HCT116 (cell line): ENCODE measurements at regions of chr1 and their contacts with region 1.

Region 1: GRCh38 chr1:35769759-35770446 is at the start of gene CLSPN:
- DNase-seq: peak; percentile 91
- ATAC-seq: peak; percentile 94
- H3K4me3 ChIP-seq: peak within 1 kb of the TSS; percentile 70 to 89
- H3K27ac ChIP-seq: peak within 1 kb of the TSS; percentile 79
- H3K4me1 ChIP-seq: peaks cover 0 to 17% of the 10 kb centered on the region in 2 experiments; a peak in 3 of 4 replicates
- H3K27me3 ChIP-seq: no peaks in the 10 kb centered on the region
- CTCF ChIP-seq: no peak
- POLR2A ChIP-seq: peak; percentile 66
- RAD21 ChIP-seq: no peak
- total RNA-seq, gene CLSPN: 35.2 TPM

Region 2: DNA sequence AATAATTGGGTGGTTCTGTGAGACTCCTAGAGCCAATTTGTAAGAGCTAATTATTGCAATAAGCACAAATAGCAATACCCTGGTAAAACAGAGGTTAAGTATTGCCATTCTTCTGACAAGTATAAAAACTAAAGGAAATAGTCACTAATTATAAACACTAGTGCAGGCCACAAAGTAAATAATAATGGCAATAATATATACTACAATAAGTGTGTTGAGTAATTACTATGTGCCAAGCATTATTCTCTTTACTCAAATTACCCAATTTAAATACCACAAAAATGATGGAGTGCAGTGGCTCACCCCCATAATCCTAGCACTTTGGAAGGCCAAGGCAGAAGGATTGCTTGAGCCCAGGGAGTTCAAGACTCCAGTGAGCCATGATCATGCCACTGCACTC is 753.5 kb before region 1 on chr1:
- CTCF ChIA-PET with region 1: no interaction called
- POLR2A ChIA-PET with region 1: no interaction called
- RAD21 ChIA-PET with region 1: no interaction called
- intact Hi-C with region 1: no loop called
- DNase-seq: no peak
- ATAC-seq: no peak
- H3K4me3 ChIP-seq: no peak overlapping the region
- H3K27ac ChIP-seq: no peak overlapping the region
- H3K4me1 ChIP-seq: no peaks in the 10 kb centered on the region
- H3K27me3 ChIP-seq: no peaks in the 10 kb centered on the region
- CTCF ChIP-seq: no peak
- POLR2A ChIP-seq: no peak
- RAD21 ChIP-seq: no peak

Region 3: DNA sequence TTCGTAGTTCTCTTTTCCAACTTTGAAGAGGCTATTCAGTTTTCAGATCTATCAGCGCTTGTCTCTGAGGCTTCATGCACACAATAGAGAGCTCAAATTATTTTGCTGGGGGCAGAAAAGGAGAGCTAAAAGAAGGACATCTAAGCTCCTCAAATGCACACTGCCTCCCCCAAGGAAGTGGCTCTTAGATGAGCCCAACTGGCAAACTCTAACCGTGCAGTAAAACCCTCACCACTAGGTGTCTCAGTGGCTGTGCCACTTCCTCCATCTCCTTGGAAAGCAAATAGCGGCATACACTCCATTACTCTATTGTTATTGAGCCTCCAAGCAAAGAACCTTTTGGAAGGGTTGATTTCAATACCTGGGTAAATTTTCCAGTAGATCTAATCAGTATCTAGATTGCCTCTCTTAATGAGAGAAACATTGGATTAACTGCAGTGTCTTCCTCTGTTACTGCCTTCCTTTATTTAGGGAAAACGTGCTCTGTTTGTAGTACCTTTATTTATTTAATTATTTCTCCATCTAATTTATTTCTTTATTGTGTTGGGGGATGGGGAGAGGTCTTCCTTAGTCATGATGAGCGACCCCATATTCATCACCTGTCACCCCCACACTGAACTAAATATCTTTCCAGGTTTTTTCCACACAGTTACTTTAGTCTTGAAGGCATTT is 567.7 kb before region 1 on chr1:
- CTCF ChIA-PET with region 1: no interaction called
- POLR2A ChIA-PET with region 1: no interaction called
- RAD21 ChIA-PET with region 1: no interaction called
- intact Hi-C with region 1: loop called (anchors 1 kb)
- DNase-seq: peak; percentile 79
- ATAC-seq: peak; percentile 100
- H3K4me3 ChIP-seq: no peak overlapping the region; a peak in 1 of 4 replicates
- H3K27ac ChIP-seq: no peak overlapping the region
- H3K4me1 ChIP-seq: peaks cover 0 to 9% of the 10 kb centered on the region in 2 experiments; a peak in 2 of 4 replicates
- H3K27me3 ChIP-seq: no peaks in the 10 kb centered on the region
- CTCF ChIP-seq: peak; percentile 85 to 89 (median 88)
- POLR2A ChIP-seq: no peak
- RAD21 ChIP-seq: peak; percentile 77

Region 4: DNA sequence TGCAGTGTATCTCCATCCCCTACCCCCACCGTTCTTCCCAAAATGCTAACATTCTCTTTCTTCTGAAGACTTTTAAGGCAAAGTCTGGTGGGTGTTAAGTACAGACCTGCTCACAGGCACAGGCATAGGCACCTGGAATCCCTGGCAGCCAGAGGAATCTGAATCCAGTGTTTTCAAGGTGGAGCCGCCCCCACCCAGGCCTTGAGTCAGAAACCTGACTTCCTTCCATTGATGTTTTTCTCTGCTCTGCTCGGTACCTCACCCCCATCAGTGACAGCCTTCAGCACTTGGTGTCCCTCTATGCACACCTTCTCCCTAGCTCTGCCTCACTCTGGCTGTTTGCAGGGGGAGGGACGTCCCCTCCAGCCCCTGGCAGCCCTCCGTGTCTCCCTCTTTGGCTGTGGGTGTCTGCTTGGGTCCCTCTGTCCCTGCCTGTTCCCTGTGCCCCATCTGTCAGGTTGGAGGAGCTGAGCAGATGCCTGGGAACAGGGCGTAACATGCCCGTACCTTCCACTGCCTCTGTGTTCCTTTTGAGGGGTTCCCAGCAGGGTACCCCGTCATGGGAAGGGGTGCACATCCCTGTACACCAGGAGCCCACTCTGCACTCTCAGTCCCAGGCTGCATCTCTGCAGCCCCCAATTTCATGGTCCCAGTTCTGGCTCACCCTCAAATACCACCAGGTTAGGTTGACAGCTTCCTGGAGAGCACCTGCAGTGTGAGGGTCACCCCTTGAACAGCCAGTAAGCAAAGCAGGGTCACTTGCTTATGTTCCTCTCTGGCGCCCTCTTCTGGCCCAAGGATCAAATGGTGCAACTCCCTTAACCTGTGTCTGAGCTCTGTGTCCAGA is 205.6 kb before region 1 on chr1:
- CTCF ChIA-PET with region 1: interaction called, 7 read pairs
- POLR2A ChIA-PET with region 1: interaction called, 3 read pairs
- RAD21 ChIA-PET with region 1: no interaction called
- intact Hi-C with region 1: loop called (anchors 1 kb)
- DNase-seq: peak; percentile 58
- ATAC-seq: peak; percentile 77
- H3K4me3 ChIP-seq: no peak overlapping the region
- H3K27ac ChIP-seq: no peak overlapping the region
- H3K4me1 ChIP-seq: no peaks in the 10 kb centered on the region
- H3K27me3 ChIP-seq: no peaks in the 10 kb centered on the region
- CTCF ChIP-seq: peak; percentile 59 to 81 (median 72)
- POLR2A ChIP-seq: no peak
- RAD21 ChIP-seq: peak; percentile 75

Region 5: GRCh38 chr1:35715568-35716002 is 54.3 kb before region 1 on chr1:
- CTCF ChIA-PET with region 1: interaction called, 16 read pairs
- POLR2A ChIA-PET with region 1: interaction called, 3 read pairs
- RAD21 ChIA-PET with region 1: no interaction called
- intact Hi-C with region 1: loop called (anchors 5 kb)
- DNase-seq: peak; percentile 72
- ATAC-seq: peak; percentile 69
- H3K4me3 ChIP-seq: no peak overlapping the region
- H3K27ac ChIP-seq: no peak overlapping the region; the same call in 1 of the 2 replicates
- H3K4me1 ChIP-seq: peaks cover 11 to 25% of the 10 kb centered on the region in 2 experiments
- H3K27me3 ChIP-seq: no peaks in the 10 kb centered on the region
- CTCF ChIP-seq: peak; percentile 71 to 93 (median 89)
- POLR2A ChIP-seq: no peak
- RAD21 ChIP-seq: peak; percentile 84

Region 6: GRCh38 chr1:35835398-35835797 is 65.5 kb after region 1 on chr1:
- CTCF ChIA-PET with region 1: no interaction called
- POLR2A ChIA-PET with region 1: no interaction called
- RAD21 ChIA-PET with region 1: no interaction called
- intact Hi-C with region 1: no loop called
- DNase-seq: no peak
- ATAC-seq: no peak
- H3K4me3 ChIP-seq: no peak overlapping the region
- H3K27ac ChIP-seq: no peak overlapping the region
- H3K4me1 ChIP-seq: no peaks in the 10 kb centered on the region
- H3K27me3 ChIP-seq: no peaks in the 10 kb centered on the region
- CTCF ChIP-seq: no peak
- POLR2A ChIP-seq: no peak
- RAD21 ChIP-seq: no peak